Caco-2 (cell line): ENCODE measurements at regions of chr19 and their contacts with region 1.

Region 1: DNA sequence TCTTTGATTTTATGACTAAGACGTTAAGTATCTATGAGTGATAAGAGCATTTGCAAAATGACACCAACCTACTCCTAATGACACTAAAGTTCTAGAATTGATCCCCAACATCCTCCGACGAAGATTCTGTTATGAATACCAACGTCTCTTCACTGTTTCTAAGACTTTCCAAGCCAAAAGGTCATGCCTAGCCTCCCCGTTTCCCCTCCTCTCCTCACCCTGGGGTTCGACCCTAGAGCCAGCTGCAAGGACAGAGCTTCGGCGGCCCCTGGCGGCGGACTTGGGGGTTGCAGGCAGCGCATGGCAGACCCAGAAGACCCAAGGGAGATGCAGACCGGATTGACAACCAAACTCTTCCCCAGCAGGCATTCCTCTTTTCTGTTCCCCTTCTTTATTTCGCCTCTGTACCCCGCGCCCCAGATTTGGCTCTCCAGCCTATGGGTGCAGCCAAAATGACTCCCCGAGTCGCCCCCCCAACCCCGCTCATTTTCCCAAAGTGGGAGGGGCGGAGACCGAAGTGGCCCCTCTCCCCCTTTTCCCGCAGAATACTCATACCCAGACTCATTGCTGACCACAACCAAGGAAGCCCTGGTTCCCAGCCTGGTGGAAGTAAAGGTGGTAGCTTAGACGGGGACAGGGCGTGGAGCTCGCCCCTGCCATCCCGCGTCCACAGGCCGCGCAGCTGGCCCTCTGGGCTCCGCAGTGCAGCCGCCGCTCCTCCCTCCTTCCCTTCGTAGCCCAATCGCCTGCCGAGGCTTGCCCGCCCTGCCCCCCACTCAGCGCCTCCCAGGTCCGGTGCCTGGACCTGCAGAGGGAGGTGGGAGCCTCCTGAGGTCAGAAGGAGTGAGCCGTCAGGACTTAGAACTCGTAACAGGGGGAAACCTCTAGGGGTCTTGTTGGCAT is 4.1 kb upstream of the EML2 start:
- DNase-seq: peak; percentile 91 to 95
- H3K4me3 ChIP-seq: peak overlapping the region; percentile 41
- H3K4me3 Mint-ChIP-seq: peak overlapping the region; percentile 70
- H3K27ac Mint-ChIP-seq: no peak overlapping the region
- H3K4me1 ChIP-seq: peaks cover 20% of the 10 kb centered on the region
- H3K4me1 Mint-ChIP-seq: peaks cover 25% of the 10 kb centered on the region
- H3K27me3 ChIP-seq: no peaks in the 10 kb centered on the region
- H3K27me3 Mint-ChIP-seq: no peaks in the 10 kb centered on the region
- CTCF ChIP-seq: peak; percentile 99

Region 2: GRCh38 chr19:45496349-45496953 is 146.8 kb before region 1 on chr19:
- CTCF ChIA-PET with region 1: interaction called, 18 read pairs
- POLR2A ChIA-PET with region 1: interaction called, 3 read pairs
- intact Hi-C with region 1: loop called (anchors 10 kb)
- DNase-seq: peak in 1 of 2 experiments; percentile 76
- H3K4me3 ChIP-seq: peak overlapping the region; percentile 80
- H3K4me3 Mint-ChIP-seq: peak overlapping the region; percentile 98
- H3K27ac Mint-ChIP-seq: peak overlapping the region; percentile 85
- H3K4me1 ChIP-seq: peaks cover 22% of the 10 kb centered on the region
- H3K4me1 Mint-ChIP-seq: peaks cover 23% of the 10 kb centered on the region
- H3K27me3 ChIP-seq: no peaks in the 10 kb centered on the region
- H3K27me3 Mint-ChIP-seq: peaks cover 8% of the 10 kb centered on the region
- CTCF ChIP-seq: no peak

Region 3: DNA sequence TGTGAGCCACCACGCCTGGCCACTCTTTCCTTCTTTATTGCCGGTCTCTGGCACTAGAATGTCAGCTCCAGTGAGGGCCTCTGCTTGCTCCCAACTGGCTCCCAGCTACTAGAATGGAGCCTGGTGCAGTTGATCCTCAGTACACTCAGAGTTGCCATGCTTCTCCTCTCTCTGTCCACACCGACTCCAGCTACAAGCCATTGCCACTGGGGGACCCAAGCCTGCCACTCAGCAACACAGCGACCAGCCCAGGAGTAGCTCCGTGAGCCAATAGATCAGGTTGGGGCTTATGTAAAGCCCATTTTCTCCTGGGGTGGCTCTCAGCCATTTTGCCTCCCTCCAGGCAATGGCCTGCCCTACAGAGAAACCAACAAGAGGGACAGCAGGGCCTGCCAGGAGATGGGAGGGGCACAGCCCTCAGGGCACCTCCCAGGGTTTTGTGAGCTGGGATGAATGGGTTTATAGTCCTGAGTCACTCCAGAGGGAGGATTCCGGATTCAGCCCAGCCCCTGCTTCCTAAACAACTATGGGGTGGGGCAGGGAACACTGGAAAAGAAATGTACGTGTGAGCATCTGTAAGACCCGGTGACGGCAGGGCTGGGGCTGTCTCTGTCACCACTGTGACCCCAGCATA is 95.2 kb before region 1 on chr19:
- CTCF ChIA-PET with region 1: no interaction called
- POLR2A ChIA-PET with region 1: no interaction called
- intact Hi-C with region 1: no loop called
- DNase-seq: no peak
- H3K4me3 ChIP-seq: no peak overlapping the region
- H3K4me3 Mint-ChIP-seq: no peak overlapping the region
- H3K27ac Mint-ChIP-seq: no peak overlapping the region
- H3K4me1 ChIP-seq: no peaks in the 10 kb centered on the region
- H3K4me1 Mint-ChIP-seq: no peaks in the 10 kb centered on the region
- H3K27me3 ChIP-seq: no peaks in the 10 kb centered on the region
- H3K27me3 Mint-ChIP-seq: no peaks in the 10 kb centered on the region
- CTCF ChIP-seq: no peak

Region 4: GRCh38 chr19:45558399-45558878 is 84.8 kb before region 1 on chr19:
- CTCF ChIA-PET with region 1: interaction called, 12 read pairs
- POLR2A ChIA-PET with region 1: no interaction called
- intact Hi-C with region 1: no loop called
- DNase-seq: peak; percentile 61 to 70
- H3K4me3 ChIP-seq: no peak overlapping the region
- H3K4me3 Mint-ChIP-seq: no peak overlapping the region
- H3K27ac Mint-ChIP-seq: no peak overlapping the region
- H3K4me1 ChIP-seq: no peaks in the 10 kb centered on the region
- H3K4me1 Mint-ChIP-seq: peaks cover 14% of the 10 kb centered on the region
- H3K27me3 ChIP-seq: no peaks in the 10 kb centered on the region
- H3K27me3 Mint-ChIP-seq: no peaks in the 10 kb centered on the region
- CTCF ChIP-seq: peak; percentile 63 to 80

Region 5: DNA sequence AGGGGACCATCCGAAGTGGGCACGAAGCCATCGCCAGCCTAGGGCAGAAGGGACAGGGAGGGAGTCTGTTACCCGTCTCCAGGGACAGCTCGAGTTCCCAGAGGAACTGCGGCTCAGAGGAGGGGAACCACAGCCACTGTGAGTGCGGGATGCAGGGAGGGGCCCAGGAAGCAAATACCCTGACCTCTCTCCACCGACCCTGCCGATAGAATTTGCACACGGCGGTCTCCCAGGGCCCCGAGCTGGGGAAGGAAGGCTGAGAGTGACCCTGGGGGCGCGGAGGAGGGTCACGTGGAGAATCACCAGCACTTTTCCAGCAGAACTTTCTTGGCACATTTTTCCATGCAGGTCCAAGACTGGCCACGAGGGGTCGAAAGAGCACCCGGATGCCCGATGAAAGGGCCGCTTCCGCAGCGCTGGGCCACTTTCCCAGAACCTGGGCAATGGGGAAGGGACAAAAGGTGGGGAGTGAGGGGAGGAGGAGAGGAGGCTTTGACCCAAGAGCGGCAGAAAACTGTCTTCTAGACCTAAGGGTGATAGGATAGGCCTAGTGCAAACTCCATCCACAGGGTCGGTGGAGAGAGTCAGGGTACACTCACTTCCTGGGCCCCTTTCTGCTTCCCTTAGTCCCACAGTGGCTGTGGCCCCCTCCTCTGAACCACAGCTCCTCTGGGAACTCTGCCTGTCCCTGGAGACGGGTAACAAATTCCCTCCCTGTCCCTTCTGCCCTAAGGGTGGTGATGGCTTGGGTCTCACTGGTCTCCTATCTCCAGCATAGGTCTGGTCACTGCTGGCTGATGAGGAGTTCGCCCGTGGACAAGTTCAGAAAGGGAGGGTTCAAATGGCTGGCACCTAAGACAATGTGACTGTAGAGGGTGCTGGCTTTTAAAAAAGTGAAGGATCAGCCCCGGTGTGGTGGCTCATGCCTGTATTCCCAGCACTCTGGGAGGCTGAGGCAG is 35.9 kb before region 1 on chr19:
- CTCF ChIA-PET with region 1: interaction called, 52 read pairs
- POLR2A ChIA-PET with region 1: interaction called, 3 read pairs
- intact Hi-C with region 1: loop called (anchors 1 kb)
- DNase-seq: peak; percentile 78 to 86
- H3K4me3 ChIP-seq: peak overlapping the region; percentile 13
- H3K4me3 Mint-ChIP-seq: peak overlapping the region; percentile 52
- H3K27ac Mint-ChIP-seq: peak overlapping the region; percentile 69
- H3K4me1 ChIP-seq: peaks cover 7% of the 10 kb centered on the region
- H3K4me1 Mint-ChIP-seq: peaks cover 10% of the 10 kb centered on the region
- H3K27me3 ChIP-seq: no peaks in the 10 kb centered on the region; the same call in 1 of the 2 replicates
- H3K27me3 Mint-ChIP-seq: peaks cover 4% of the 10 kb centered on the region
- CTCF ChIP-seq: peak; percentile 90 to 94

Region 6: GRCh38 chr19:45657520-45658167 is 14.4 kb after region 1 on chr19:
- CTCF ChIA-PET with region 1: interaction called, 10 read pairs
- POLR2A ChIA-PET with region 1: no interaction called
- intact Hi-C with region 1: no loop called
- DNase-seq: peak; percentile 69 to 71
- H3K4me3 ChIP-seq: no peak overlapping the region
- H3K4me3 Mint-ChIP-seq: peak overlapping the region; percentile 40
- H3K27ac Mint-ChIP-seq: no peak overlapping the region
- H3K4me1 ChIP-seq: peaks cover 4% of the 10 kb centered on the region; the same call in 1 of the 2 replicates
- H3K4me1 Mint-ChIP-seq: peaks cover 20% of the 10 kb centered on the region
- H3K27me3 ChIP-seq: no peaks in the 10 kb centered on the region
- H3K27me3 Mint-ChIP-seq: no peaks in the 10 kb centered on the region
- CTCF ChIP-seq: no peak

Region 7: DNA sequence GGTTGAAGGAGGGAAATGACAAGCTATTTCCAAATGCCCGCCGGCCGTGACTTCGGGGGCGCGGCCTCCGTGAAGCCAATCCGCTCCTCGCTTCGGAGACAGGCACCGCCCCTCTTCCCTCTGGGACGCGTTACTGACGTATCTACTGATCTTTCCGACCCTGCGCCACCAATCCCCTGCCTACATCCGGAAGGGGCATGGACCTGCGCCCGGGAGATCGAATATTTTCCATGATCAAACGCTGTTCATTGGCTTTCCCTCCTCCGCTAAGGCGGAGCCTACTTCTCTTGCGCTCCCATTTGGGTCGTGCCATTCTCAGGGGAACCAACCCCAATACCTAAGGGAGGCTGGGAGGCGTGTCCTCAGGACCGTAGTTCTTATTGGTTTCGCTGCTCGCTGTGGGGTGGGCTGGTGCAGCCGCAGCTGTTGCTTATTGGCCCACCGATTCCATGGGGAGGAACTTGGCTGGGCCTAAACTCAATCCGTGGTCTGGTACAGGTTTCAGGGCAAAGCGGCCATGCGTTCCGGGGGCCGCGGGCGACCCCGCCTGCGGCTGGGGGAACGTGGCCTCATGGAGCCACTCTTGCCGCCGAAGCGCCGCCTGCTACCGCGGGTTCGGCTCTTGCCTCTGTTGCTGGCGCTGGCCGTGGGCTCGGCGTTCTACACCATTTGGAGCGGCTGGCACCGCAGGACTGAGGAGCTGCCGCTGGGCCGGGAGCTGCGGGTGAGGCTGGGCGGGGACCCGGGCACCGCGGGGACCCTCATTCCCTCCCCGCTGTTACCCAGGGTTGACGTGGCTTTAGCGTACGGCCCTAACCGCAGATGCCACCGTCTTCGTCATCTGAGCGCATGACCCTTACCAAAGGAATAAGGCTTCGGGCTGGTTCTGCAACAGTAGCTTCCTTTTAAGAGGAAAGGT is 49.2 kb after region 1 on chr19 and contains the start of gene QPCTL:
- CTCF ChIA-PET with region 1: interaction called, 17 read pairs
- POLR2A ChIA-PET with region 1: interaction called, 4 read pairs
- intact Hi-C with region 1: no loop called
- DNase-seq: peak; percentile 98 to 99
- H3K4me3 ChIP-seq: peak within 1 kb of the TSS; percentile 95
- H3K4me3 Mint-ChIP-seq: peak within 1 kb of the TSS; percentile 83
- H3K27ac Mint-ChIP-seq: peak within 1 kb of the TSS; percentile 93
- H3K4me1 ChIP-seq: peaks cover 4% of the 10 kb centered on the region; the same call in 1 of the 2 replicates
- H3K4me1 Mint-ChIP-seq: no peaks in the 10 kb centered on the region
- H3K27me3 ChIP-seq: no peaks in the 10 kb centered on the region
- H3K27me3 Mint-ChIP-seq: no peaks in the 10 kb centered on the region
- CTCF ChIP-seq: no peak
- total RNA-seq, gene QPCTL: 16.9 and 20.2 TPM in 2 replicates